HEK293 (cell line): ENCODE measurements at regions of chr7 and their contacts with region 1.

Region 1: DNA sequence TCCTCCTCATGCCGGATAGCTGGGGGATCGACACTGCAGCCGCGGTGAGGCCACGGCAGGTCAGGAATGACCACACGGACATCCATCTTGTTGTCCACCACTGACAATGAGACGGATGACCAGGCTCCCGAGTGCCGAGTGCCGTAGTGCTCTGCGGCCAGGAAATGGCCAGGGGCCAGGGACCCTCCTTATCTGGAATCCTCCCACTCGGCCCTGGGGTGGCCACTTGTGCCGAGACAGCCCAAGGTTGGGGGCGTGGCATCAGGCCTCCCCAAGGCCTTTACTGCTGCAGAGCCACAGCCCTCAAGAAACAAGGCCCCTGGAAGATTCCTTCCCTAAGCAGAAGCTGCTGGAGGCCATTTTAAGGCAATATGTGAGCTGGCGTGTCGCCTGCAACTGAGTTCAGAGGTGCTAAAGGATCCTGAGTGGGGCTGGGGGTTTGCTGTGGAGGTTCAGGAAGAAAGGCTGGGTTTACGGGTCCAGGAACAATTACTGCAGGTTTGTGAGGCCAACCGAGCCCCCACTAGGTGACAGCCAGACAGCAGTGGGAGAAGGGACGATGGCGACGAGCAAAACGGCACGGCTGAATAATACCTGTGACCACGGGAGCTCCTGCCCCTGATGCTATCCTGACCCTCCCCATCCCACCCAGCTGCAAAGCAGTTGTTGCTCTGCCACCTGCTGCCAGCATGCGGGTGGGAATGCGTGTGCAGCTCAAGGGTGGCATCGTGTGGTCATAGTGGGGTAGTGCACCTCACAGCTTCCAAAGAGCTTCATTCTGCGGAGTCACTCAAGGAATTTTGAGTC is 31.6 kb upstream of the LEP start:
- H3K4me3 ChIP-seq: no peak overlapping the region
- H3K27ac ChIP-seq: no peak overlapping the region
- H3K4me1 ChIP-seq: no peaks in the 10 kb centered on the region
- CTCF ChIP-seq: peak; percentile 99

Region 2: GRCh38 chr7:127708788-127709187 is 500.6 kb before region 1 on chr7:
- CTCF ChIA-PET with region 1: interaction called, 148 read pairs
- POLR2A ChIA-PET with region 1: interaction called, 3 read pairs
- H3K4me3 ChIP-seq: no peak overlapping the region
- H3K27ac ChIP-seq: no peak overlapping the region
- H3K4me1 ChIP-seq: no peaks in the 10 kb centered on the region
- CTCF ChIP-seq: peak; percentile 71

Region 3: GRCh38 chr7:128041203-128041602 is 168.2 kb before region 1 on chr7:
- CTCF ChIA-PET with region 1: interaction called, 69 read pairs
- POLR2A ChIA-PET with region 1: no interaction called
- H3K4me3 ChIP-seq: no peak overlapping the region
- H3K27ac ChIP-seq: no peak overlapping the region
- H3K4me1 ChIP-seq: peaks cover 6% of the 10 kb centered on the region
- CTCF ChIP-seq: no peak

Region 4: DNA sequence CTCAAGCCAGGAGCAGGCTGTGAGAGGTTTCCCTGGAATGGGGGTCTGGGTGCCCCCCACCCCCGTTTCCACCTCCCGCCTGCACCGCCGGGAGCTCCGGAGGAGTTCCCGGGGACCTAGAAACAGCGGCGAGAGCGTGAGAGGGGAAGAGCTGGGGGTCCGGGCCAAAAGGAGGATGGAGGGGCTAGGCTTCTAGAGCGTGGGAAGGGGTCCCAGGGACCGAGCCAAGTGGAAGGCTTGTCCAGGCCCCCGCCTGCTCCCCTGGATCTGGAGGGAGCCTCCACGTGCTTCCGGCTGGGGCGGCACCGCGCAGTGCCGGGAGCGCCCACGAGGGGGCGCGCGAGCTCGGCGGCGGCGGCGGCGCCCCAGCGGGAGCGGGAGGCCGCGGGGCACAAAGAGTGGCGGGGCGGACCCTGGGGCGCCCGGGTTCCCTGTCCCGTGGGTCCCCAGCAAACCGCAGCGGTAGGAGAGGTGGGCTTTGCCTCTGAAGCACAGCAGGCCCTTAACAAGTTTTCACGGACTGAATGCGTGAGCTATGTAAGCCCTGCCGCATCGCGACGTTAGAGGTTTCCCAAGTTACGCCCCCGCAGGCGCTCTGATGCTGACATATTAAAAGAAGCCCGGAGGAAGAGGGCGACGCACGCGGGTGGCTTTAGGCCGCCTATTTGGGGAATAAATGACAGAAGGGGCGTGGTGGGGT is 73.8 kb before region 1 on chr7:
- CTCF ChIA-PET with region 1: interaction called, 115 read pairs
- POLR2A ChIA-PET with region 1: interaction called, 4 read pairs
- H3K4me3 ChIP-seq: peak overlapping the region; percentile 58
- H3K27ac ChIP-seq: no peak overlapping the region
- H3K4me1 ChIP-seq: no peaks in the 10 kb centered on the region
- CTCF ChIP-seq: no peak

Region 5: GRCh38 chr7:128221929-128222403 is 12.5 kb after region 1 on chr7:
- CTCF ChIA-PET with region 1: interaction called, 47 read pairs
- POLR2A ChIA-PET with region 1: interaction called, 8 read pairs
- H3K4me3 ChIP-seq: no peak overlapping the region
- H3K27ac ChIP-seq: no peak overlapping the region
- H3K4me1 ChIP-seq: no peaks in the 10 kb centered on the region
- CTCF ChIP-seq: no peak